Dorsolateral prefrontal cortex (tissue), 120 donors: ENCODE measurements at regions of chr3 and their contacts with region 1.

Region 1: DNA sequence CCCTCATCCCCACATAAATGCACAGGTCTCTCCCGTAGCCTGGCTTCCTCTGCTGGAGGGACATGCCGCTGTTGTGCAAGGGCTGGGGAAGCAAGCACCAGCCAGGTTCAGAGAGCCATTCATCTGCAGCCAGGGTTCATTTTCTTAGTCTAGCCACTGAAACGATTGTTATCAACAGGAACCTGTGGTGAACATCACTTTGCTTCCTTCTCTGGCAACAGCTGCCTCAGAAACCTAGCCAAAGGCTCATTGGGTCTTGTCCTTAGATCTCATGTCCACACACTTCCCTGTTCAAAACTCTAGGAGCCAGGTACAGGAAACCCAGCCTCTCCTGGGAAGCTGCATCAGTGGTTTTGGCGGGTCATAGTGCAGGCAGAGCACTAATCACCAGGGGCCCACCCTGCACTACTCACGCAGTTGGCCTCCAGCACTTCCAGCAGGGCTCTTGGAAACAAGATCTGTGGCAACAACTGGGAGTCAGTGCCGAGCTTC is 47.0 kb downstream of the OXNAD1 start:
- DNase-seq: no peak
- H3K4me3 ChIP-seq: no peak overlapping the region
- H3K27ac ChIP-seq: peak overlapping the region in 45 of 59 donors; percentile 1 to 82 (median 49)
- H3K27me3 ChIP-seq: no peaks in the 10 kb centered on the region
- CTCF ChIP-seq: no peak

Region 2: DNA sequence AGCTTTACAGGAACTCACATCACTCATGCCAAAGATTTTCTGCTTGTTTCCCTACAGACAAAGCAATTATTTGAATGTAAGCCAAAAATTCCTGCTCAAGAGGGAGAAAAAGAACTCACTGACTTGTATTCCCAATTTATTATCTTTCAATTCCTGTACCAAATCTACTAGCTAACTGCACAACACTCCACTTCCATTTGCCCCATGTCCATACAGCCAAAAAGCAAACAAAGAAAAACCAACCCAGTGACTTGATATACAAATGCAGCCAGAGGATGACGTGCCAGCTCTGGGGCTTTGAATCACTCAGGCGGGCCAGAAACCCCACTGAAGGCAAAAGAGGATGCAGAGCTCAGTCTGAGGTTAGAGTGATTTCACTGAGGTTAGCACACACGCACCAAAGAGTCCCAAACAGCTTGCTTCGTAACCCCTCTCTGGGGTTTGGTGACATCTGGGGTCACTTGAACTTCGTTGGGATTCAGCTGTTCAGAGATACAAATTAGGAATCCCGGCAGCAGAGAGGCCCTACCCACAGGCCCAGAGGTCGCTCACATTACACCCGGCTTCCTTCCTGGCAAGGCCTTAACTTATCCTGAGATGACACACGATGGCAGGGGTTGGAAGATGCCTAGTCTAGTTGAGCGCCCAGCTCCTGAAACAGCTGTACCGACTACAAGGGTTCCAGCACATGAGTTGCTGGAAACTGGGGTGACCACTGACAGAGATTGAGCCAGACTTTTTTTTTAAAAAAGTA is 199.9 kb after region 1 on chr3:
- intact Hi-C with region 1: loop called in 1 of 2 experiments (anchors 5 kb)
- DNase-seq: no peak
- H3K4me3 ChIP-seq: peak overlapping the region; percentile 8 to 82 (median 72)
- H3K27ac ChIP-seq: peak overlapping the region in 39 of 59 donors; percentile 10 to 86 (median 66)
- H3K27me3 ChIP-seq: peaks cover 0 to 30% (median 0%) of the 10 kb centered on the region in 45 donors
- CTCF ChIP-seq: no peak

Region 3: GRCh38 chr3:16741103-16741758 is 429.2 kb after region 1 on chr3:
- intact Hi-C with region 1: no loop called
- DNase-seq: no peak
- H3K4me3 ChIP-seq: no peak overlapping the region
- H3K27ac ChIP-seq: no peak overlapping the region
- H3K27me3 ChIP-seq: no peaks in the 10 kb centered on the region
- CTCF ChIP-seq: no peak